ENCODE measurements at regions of chr9 and their contacts with region 1.

Region 1: GRCh38 chr9:112486221-112487007 is at the start of gene KIAA1958:
- DNase-seq: peak; percentile 73
- ATAC-seq: peak; percentile 91
- H3K4me3 ChIP-seq: peak within 1 kb of the TSS; percentile 77
- H3K27ac ChIP-seq: peak within 1 kb of the TSS; percentile 68
- H3K4me1 ChIP-seq: peaks cover 6% of the 10 kb centered on the region; the same call in 1 of the 2 replicates
- H3K27me3 ChIP-seq: no peaks in the 10 kb centered on the region
- CTCF ChIP-seq: no peak
- POLR2A ChIP-seq: no peak
- RAD21 ChIP-seq: no peak
- total RNA-seq, gene KIAA1958: 1.4 and 1.8 TPM in 2 replicates

Region 2: DNA sequence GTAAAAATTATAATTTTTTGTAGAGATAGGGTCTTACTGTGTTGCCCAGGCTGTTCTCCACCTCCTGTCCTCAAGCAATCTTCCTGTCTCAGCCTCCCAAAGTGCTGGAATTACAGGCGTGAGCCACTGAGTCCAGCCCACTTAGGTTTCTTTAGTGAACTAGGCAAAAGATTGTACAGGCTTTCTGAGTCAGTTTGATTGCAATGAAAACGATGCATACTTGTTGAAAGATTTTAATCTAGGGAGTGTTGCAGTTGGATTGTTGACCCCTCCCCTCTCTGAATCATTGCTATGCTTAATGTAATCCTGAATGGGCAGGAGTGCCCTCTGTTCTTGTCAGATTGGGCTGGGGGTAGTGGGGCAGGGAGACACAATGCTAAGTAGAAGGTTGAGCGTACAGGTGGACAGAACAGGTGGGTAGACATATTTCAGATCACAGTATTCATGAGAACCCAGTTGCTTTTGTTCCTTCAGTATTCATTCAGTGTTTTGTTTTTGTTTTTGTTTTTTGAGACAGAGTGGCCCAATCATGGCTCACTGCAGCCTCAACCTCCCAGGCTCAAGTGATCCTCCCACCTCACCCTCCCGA is 70.2 kb after region 1 on chr9:
- CTCF ChIA-PET with region 1: no interaction called
- POLR2A ChIA-PET with region 1: no interaction called
- dilution Hi-C with region 1: no loop called
- in situ Hi-C with region 1: no loop called
- intact Hi-C with region 1: loop called (anchors 5 kb)
- DNase-seq: peak; percentile 75
- ATAC-seq: peak; percentile 81
- H3K4me3 ChIP-seq: no peak overlapping the region
- H3K27ac ChIP-seq: no peak overlapping the region
- H3K4me1 ChIP-seq: peaks cover 12% of the 10 kb centered on the region
- H3K27me3 ChIP-seq: no peaks in the 10 kb centered on the region
- CTCF ChIP-seq: no peak
- POLR2A ChIP-seq: no peak
- RAD21 ChIP-seq: no peak

Region 3: DNA sequence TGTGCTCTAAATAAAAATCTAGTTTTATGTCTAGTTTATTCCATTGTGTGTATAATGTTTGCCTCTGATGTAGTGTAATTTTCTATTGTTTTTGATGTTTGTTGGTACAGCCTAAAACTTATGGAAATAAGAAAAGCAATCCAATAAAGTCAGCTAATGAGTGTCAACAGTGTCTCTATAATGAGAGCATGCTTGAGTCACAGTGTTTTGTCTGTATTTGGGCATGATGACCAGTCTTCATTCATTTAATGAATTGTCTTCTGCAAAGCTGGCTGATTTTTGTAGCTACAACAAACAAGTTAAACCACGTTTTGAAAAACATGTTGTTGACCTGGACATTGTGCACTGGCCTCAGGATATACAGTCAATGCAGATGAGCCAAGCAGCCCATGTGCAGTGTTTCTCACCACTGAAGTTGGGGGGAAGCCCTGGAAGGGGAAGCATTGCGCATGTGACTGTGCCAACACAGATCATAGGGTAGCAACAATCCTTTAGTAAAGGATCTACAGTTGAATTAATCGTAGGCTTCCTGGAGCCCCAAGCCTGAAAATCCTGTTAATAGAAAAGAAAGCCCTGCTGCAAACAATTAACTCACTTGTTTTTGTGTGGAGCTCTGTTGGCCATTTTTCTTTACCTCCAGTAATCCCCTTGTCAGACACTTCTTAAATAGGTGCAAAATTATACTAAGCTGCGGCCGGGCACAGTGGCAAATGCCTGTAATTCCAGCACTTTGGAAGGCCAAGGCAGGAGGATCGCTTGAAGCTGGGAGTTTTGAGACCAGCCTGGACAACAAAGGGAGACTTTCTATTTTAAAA is 143.5 kb after region 1 on chr9:
- CTCF ChIA-PET with region 1: no interaction called
- POLR2A ChIA-PET with region 1: no interaction called
- dilution Hi-C with region 1: no loop called
- in situ Hi-C with region 1: no loop called
- intact Hi-C with region 1: loop called (anchors 10 kb)
- DNase-seq: no peak
- ATAC-seq: no peak
- H3K4me3 ChIP-seq: no peak overlapping the region
- H3K27ac ChIP-seq: no peak overlapping the region
- H3K4me1 ChIP-seq: no peaks in the 10 kb centered on the region
- H3K27me3 ChIP-seq: no peaks in the 10 kb centered on the region
- CTCF ChIP-seq: no peak
- POLR2A ChIP-seq: no peak
- RAD21 ChIP-seq: no peak

Measured in IMR-90 (cell line).